Activated naive CD4-positive, alpha-beta T cell treated with anti-CD3 and anti-CD28 coated beads for 36 hours (primary cell): ENCODE measurements at regions of chr15 and their contacts with region 1.

Region 1: GRCh38 chr15:65653341-65653740 is 31.6 kb downstream of the SLC24A1 start:
- DNase-seq: no peak
- H3K4me3 Mint-ChIP-seq: no peak overlapping the region
- H3K27ac Mint-ChIP-seq: no peak overlapping the region
- H3K4me1 Mint-ChIP-seq: no peaks in the 10 kb centered on the region
- H3K27me3 Mint-ChIP-seq: no peaks in the 10 kb centered on the region

Region 2: DNA sequence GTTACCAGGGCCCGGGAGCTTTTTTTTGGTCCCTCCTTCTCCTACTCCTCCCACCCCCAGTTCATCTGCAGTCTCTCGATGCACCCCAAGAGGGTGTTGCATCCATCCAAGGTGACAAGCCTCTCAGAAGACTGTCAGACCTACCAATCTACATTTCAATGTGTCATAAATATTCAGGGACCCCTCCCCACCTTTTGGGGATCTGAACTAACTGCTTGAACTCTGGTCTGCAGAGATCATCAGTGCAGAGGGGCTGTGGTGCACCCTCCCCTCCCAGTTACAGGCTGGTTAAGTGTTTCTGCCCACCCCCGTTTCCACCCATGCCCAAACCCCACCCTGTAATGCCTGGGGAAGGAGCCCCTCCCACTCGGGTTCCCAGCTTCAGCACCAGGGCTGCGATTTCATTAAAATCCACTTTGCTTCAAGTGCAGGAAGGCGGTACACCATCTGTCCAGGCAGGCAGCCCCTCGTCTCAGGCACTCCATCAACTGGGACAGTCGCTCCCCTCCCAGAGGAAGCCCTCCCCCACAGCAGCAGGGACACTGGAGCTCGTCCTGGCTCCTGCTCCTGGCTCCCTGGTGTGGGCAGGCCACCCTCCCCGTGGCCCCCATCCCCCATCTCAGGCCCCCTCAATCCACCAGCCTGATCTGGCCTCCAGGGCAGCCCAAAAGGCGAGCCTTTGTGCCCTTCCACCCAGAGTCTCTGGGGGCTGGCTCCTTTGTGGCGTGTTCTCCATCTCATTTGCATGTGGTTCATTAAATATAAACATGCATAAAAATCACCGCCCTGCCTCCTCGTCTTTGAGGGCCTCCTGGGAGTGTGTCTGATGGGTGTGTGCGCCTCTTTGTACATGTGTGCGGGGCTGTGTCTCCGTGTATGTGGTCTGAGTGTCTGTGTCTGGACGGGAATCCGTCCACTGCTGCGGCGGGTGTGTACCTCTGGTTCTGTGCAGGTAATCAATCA is 316.6 kb before region 1 on chr15:
- CTCF ChIA-PET with region 1: no interaction called
- intact Hi-C with region 1: no loop called
- DNase-seq: no peak
- H3K4me3 Mint-ChIP-seq: no peak overlapping the region
- H3K27ac Mint-ChIP-seq: no peak overlapping the region
- H3K4me1 Mint-ChIP-seq: no peaks in the 10 kb centered on the region
- H3K27me3 Mint-ChIP-seq: peaks cover 3% of the 10 kb centered on the region

Region 3: GRCh38 chr15:65939901-65940617 is 286.7 kb after region 1 on chr15:
- CTCF ChIA-PET with region 1: no interaction called
- intact Hi-C with region 1: loop called (anchors 5 kb)
- DNase-seq: no peak
- H3K4me3 Mint-ChIP-seq: no peak overlapping the region
- H3K27ac Mint-ChIP-seq: no peak overlapping the region
- H3K4me1 Mint-ChIP-seq: no peaks in the 10 kb centered on the region
- H3K27me3 Mint-ChIP-seq: no peaks in the 10 kb centered on the region